Caco-2 (cell line): ENCODE measurements at regions of chr14 and their contacts with region 1.

Region 1: GRCh38 chr14:88385345-88386101 is at the start of gene SPATA7:
- DNase-seq: peak; percentile 89 to 92
- H3K4me3 ChIP-seq: peak within 1 kb of the TSS; percentile 94
- H3K4me3 Mint-ChIP-seq: peak within 1 kb of the TSS; percentile 98
- H3K27ac Mint-ChIP-seq: peak within 1 kb of the TSS; percentile 89
- H3K4me1 ChIP-seq: no peaks in the 10 kb centered on the region
- H3K4me1 Mint-ChIP-seq: no peaks in the 10 kb centered on the region
- H3K27me3 ChIP-seq: no peaks in the 10 kb centered on the region
- H3K27me3 Mint-ChIP-seq: peaks cover 3% of the 10 kb centered on the region
- CTCF ChIP-seq: no peak
- total RNA-seq, gene SPATA7: 8.2 and 8.7 TPM in 2 replicates

Region 2: DNA sequence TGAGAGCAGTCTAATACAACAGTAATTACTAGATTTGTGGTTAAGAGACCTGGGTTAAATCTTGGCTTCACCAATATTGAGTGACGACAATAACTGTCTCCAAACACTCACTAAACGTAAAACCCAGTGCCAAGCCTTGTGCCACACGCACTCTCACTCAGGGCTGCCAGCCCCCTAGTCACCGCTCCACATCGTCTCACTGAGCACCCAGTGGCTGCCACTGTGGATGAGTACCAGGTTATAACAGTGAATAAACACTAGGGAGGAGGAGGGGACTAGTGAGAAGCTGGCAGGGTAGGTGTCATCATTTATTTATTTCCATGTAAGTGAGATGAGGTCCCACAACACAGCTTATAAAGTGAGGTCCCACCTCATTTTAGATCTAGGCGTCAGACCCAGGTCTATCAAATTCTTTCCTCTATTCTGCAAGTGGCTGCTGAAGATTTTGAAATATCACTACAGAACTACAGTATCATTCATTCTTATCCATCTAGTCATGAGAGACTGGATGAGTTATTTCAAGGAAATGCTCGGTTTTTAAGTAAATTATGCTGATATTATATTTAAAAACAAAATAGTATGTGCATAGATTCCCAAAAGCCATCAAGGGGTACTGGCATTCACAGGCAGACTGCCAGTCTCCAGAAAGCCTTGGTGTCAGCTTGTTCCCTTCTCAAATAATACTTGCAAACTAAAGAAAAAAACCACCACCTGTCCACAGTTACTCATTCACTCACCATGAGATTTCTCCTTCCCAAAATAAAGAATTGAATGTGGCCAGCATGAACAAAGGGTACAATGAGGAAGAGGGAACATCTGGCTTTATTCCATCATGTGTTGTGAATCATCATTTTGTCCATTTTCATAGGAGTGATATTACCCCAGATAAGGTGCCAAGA is 85.3 kb after region 1 on chr14:
- CTCF ChIA-PET with region 1: no interaction called
- POLR2A ChIA-PET with region 1: no interaction called
- intact Hi-C with region 1: loop called (anchors 5 kb)
- DNase-seq: no peak
- H3K4me3 ChIP-seq: no peak overlapping the region
- H3K4me3 Mint-ChIP-seq: no peak overlapping the region
- H3K27ac Mint-ChIP-seq: no peak overlapping the region
- H3K4me1 ChIP-seq: peaks cover 23% of the 10 kb centered on the region
- H3K4me1 Mint-ChIP-seq: peaks cover 12% of the 10 kb centered on the region
- H3K27me3 ChIP-seq: no peaks in the 10 kb centered on the region
- H3K27me3 Mint-ChIP-seq: no peaks in the 10 kb centered on the region
- CTCF ChIP-seq: no peak